ENCODE measurements at regions of chr9 and their contacts with region 1.

Region 1: DNA sequence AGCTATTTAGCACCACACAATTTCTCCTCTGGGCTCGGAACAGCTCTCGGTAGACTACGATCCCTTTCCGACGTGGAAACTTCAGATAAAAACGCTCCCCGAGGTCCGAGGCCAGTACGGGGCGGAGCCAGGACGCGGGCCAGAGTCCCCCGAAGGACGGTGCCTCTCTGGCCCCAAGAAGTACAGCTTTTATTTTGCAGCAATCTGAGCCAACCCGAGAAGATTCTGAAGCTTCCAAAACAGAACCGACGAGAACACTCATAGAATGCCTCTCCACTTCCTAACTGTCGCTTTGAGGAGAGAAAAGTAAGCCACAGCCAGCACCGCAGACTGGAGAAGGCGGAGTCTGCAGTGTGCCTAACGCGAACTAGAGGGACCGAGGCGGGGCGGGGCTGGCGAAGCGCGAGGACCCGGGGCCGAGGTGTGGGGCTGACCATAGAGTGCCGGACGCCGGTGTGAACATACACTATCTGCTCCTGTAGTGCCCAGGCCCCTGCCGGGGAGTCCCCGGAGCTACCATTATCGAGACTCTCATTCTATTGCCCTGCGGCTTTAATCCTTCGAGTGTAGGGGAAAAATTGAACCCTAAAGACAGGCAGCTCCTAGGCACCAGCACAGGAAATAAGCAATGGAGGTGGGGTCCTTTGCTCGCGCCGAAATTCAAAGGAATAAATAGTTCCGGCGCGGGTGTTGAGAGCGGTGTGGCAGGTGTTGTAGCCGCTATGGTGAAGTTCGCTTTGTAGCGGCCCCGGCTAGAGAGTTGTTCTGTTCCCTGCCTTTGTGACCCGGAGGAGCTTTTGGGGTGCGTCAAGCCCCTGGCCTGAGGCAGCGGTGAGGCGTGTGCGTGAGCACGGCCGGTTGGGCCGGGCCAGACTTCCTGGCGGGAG is at the start of gene SMC2:
- DNase-seq: peak; percentile 89 to 97 (median 95)
- ATAC-seq: peak; percentile 98
- H3K4me3 ChIP-seq: peak within 1 kb of the TSS; percentile 87
- H3K4me3 Mint-ChIP-seq: peak within 1 kb of the TSS; percentile 95 to 100 (median 100)
- H3K27ac ChIP-seq: peak within 1 kb of the TSS; percentile 94
- H3K27ac Mint-ChIP-seq: peak within 1 kb of the TSS; percentile 94 to 100 (median 99)
- H3K4me1 ChIP-seq: peaks cover 11 to 17% of the 10 kb centered on the region in 2 donors
- H3K4me1 Mint-ChIP-seq: peaks cover 17 to 58% (median 49%) of the 10 kb centered on the region in 7 donors
- H3K27me3 ChIP-seq: no peaks in the 10 kb centered on the region
- H3K27me3 Mint-ChIP-seq: peaks cover 0 to 3% (median 0%) of the 10 kb centered on the region in 5 donors
- total RNA-seq, gene SMC2: 4.4 to 53.6 (median 11.3) TPM

Region 2: DNA sequence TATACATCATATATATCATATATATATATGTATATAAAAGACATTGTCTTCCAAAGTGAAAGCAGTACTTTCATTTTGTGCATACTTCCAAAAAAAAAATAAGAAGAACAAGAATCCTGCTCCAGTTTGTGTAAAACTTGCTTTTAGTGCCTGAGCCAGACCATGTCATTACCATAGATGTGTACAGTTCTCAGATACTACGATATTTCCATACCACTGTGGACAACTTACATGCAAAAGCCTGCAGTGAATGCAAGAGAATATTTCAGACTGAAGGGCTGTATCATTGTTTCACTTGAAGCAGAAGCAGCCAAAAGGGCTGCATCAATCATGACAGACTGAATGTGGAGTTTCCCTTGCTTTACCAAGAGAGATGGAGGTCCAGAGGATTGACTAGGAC is 1171.4 kb before region 1 on chr9:
- CTCF ChIA-PET with region 1: no interaction called
- POLR2A ChIA-PET with region 1: no interaction called
- intact Hi-C with region 1: loop called in 1 of 2 experiments (anchors 10 kb)
- DNase-seq: no peak
- ATAC-seq: no peak
- H3K4me3 ChIP-seq: no peak overlapping the region
- H3K4me3 Mint-ChIP-seq: no peak overlapping the region
- H3K27ac ChIP-seq: no peak overlapping the region
- H3K27ac Mint-ChIP-seq: no peak overlapping the region
- H3K4me1 ChIP-seq: no peaks in the 10 kb centered on the region
- H3K4me1 Mint-ChIP-seq: no peaks in the 10 kb centered on the region
- H3K27me3 ChIP-seq: no peaks in the 10 kb centered on the region
- H3K27me3 Mint-ChIP-seq: no peaks in the 10 kb centered on the region

Region 3: DNA sequence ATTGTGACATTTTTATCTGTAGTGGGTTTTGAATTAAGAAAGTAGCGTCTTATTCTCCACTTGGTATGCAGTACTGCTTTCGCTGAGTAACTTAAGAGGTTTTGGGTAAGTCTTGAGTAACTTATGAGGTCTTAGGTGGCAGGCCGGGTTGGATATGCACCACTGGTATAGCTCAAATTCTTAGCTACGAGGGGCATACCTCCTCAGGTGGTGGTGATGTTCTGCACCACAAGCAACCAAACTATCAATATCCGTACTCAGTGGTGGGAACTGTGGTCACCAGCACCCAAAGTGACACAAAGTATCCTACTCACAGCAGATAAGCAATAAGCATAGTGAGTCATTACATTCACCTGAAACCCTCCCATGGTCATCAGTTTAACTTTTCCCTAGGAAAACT is 13.9 kb after region 1 on chr9:
- CTCF ChIA-PET with region 1: no interaction called
- POLR2A ChIA-PET with region 1: interaction called, 3 read pairs
- intact Hi-C with region 1: loop called in 1 of 2 experiments (anchors 2 kb)
- DNase-seq: no peak
- ATAC-seq: no peak
- H3K4me3 ChIP-seq: no peak overlapping the region
- H3K4me3 Mint-ChIP-seq: no peak overlapping the region
- H3K27ac ChIP-seq: no peak overlapping the region
- H3K27ac Mint-ChIP-seq: no peak overlapping the region
- H3K4me1 ChIP-seq: no peaks in the 10 kb centered on the region
- H3K4me1 Mint-ChIP-seq: peaks cover 0 to 3% (median 0%) of the 10 kb centered on the region in 7 donors
- H3K27me3 ChIP-seq: no peaks in the 10 kb centered on the region
- H3K27me3 Mint-ChIP-seq: no peaks in the 10 kb centered on the region

Region 4: DNA sequence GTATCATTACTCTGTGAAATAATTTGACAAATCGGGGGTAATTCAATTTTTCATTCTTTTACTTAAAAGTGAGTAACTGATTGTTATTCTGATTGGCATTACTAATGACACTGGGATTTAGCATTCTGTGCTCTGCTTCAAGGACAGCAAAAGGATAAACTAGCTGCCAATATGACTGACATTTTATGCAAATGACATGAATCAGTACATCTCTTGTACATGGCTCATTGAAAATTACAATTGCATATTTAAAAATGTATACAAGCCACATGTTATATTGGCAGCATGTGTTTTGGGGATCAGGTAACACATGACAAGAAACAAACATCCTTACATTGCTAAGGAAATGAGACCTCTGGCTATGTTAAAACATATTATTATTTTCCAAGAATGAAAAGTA is 79.2 kb after region 1 on chr9:
- CTCF ChIA-PET with region 1: no interaction called
- POLR2A ChIA-PET with region 1: no interaction called
- intact Hi-C with region 1: no loop called
- DNase-seq: no peak
- ATAC-seq: no peak
- H3K4me3 ChIP-seq: no peak overlapping the region
- H3K4me3 Mint-ChIP-seq: no peak overlapping the region
- H3K27ac ChIP-seq: no peak overlapping the region
- H3K27ac Mint-ChIP-seq: no peak overlapping the region
- H3K4me1 ChIP-seq: no peaks in the 10 kb centered on the region
- H3K4me1 Mint-ChIP-seq: no peaks in the 10 kb centered on the region
- H3K27me3 ChIP-seq: no peaks in the 10 kb centered on the region
- H3K27me3 Mint-ChIP-seq: peaks cover 0 to 15% (median 7%) of the 10 kb centered on the region in 5 donors

Region 5: DNA sequence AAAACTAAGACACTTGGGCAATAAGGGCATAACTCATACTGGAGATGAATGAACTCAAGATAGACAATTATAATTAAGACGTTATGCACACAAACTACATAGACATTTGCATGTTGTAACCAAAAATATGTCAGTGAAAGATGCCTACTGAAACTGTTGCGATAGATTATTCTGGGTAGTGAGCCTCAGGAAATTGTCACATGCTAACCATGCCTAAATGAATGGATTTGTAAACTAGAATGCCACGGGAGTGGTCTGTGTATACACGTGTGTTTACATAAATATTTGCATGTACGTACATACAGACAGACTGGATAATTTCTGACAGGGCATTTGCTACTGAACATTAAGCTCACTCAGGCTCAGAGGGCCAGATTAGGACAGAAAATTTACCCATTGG is 671.2 kb after region 1 on chr9:
- CTCF ChIA-PET with region 1: no interaction called
- POLR2A ChIA-PET with region 1: no interaction called
- intact Hi-C with region 1: loop called in 1 of 2 experiments (anchors 5 kb)
- DNase-seq: no peak
- ATAC-seq: no peak
- H3K4me3 ChIP-seq: no peak overlapping the region
- H3K4me3 Mint-ChIP-seq: peak overlapping the region; percentile 29 to 99 (median 93)
- H3K27ac ChIP-seq: no peak overlapping the region
- H3K27ac Mint-ChIP-seq: peak overlapping the region in 1 of 9 donors; percentile 26
- H3K4me1 ChIP-seq: no peaks in the 10 kb centered on the region
- H3K4me1 Mint-ChIP-seq: peaks cover 4 to 14% (median 6%) of the 10 kb centered on the region in 7 donors
- H3K27me3 ChIP-seq: no peaks in the 10 kb centered on the region
- H3K27me3 Mint-ChIP-seq: peaks cover 0 to 7% (median 0%) of the 10 kb centered on the region in 5 donors

Region 6: DNA sequence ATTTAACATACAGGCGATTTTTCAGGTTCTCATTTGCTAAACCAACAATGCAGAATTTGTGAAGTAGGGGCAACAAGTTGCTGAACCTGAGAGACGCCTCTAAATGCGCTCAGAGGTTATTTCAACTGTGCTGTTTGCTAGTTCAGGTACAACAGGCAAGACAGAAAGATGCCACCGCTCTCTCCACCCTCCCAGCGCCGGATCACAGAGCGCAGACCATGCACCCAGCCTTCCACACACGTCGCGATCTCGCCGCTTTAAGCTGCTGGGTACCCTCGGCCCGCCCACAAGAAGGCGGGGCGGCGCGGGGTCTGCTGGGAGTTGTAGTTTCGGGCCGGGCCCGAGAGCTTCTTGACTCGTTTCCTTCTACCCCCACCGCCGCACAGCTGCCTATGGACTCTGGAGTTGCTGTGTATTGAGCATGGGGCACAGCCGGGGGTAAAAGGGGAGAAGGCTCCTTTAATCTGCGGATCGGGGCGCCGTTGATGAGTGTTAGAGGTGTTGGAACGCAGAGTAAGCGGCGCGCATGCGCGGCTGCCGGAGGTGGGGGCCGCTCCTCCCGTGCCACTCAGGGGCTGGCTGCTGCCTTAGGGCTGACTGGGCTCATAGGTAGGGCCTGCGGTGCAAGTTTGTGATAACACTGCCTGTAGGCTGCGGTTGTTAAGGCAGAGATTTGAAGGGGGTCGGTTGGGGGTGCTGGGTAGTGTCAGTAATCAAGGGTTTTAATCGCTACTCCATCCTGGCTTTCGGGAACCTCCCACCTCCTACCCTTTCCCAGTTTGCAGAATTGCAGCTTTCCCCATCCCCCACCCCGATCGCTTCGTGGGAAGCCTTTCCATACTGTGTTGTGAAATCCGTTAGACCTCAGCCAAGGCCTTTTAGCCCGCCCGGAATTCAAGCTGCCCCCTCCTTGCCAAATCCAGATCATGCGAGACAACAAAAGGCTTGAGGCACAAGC is 874.4 kb after region 1 on chr9:
- CTCF ChIA-PET with region 1: no interaction called
- POLR2A ChIA-PET with region 1: no interaction called
- intact Hi-C with region 1: loop called in 1 of 2 experiments (anchors 2 kb)
- DNase-seq: peak; percentile 80 to 95 (median 91)
- ATAC-seq: peak; percentile 99
- H3K4me3 ChIP-seq: peak overlapping the region; percentile 85
- H3K4me3 Mint-ChIP-seq: peak overlapping the region; percentile 82 to 96 (median 94)
- H3K27ac ChIP-seq: peak overlapping the region; percentile 69
- H3K27ac Mint-ChIP-seq: peak overlapping the region; percentile 64 to 92 (median 86)
- H3K4me1 ChIP-seq: peaks cover 0 to 6% of the 10 kb centered on the region in 2 donors
- H3K4me1 Mint-ChIP-seq: peaks cover 12 to 25% (median 17%) of the 10 kb centered on the region in 7 donors
- H3K27me3 ChIP-seq: peaks cover 0 to 4% of the 10 kb centered on the region in 2 donors
- H3K27me3 Mint-ChIP-seq: peaks cover 0 to 30% (median 0%) of the 10 kb centered on the region in 5 donors

Region 7: DNA sequence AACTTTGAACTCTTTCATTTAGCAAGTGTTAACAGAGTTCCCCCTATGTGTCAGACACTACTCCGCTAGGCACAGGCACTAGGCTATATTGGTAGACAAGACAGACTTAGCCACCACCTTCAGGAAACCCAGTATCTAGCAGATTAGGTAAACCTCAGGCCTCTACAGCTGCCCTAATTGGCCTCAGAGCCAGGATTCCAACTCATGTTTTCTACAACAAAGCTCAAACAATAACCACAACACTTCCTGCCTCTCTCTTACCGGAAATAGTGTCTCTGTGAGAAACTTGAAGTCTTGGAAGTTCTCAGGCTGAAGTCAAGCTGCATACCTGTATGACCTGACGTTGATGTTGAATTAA is 1034.0 kb after region 1 on chr9:
- CTCF ChIA-PET with region 1: interaction called, 3 read pairs
- POLR2A ChIA-PET with region 1: no interaction called
- intact Hi-C with region 1: loop called in 1 of 2 experiments (anchors 5 kb)
- DNase-seq: peak in 8 of 9 donors; percentile 41 to 92 (median 90)
- ATAC-seq: peak; percentile 99
- H3K4me3 ChIP-seq: no peak overlapping the region
- H3K4me3 Mint-ChIP-seq: peak overlapping the region; percentile 35 to 84 (median 74)
- H3K27ac ChIP-seq: no peak overlapping the region
- H3K27ac Mint-ChIP-seq: peak overlapping the region; percentile 42 to 95 (median 78)
- H3K4me1 ChIP-seq: peaks cover 31 to 55% of the 10 kb centered on the region in 2 donors
- H3K4me1 Mint-ChIP-seq: peaks cover 36 to 67% (median 63%) of the 10 kb centered on the region in 7 donors
- H3K27me3 ChIP-seq: no peaks in the 10 kb centered on the region
- H3K27me3 Mint-ChIP-seq: peaks cover 0 to 35% (median 0%) of the 10 kb centered on the region in 5 donors

Region 8: GRCh38 chr9:105447814-105448812 is 1354.2 kb after region 1 on chr9 and contains the start of gene FSD1L:
- CTCF ChIA-PET with region 1: no interaction called
- POLR2A ChIA-PET with region 1: no interaction called
- intact Hi-C with region 1: loop called (anchors 5 to 10 kb)
- DNase-seq: peak; percentile 38 to 86 (median 67)
- ATAC-seq: peak; percentile 94
- H3K4me3 ChIP-seq: peak within 1 kb of the TSS; percentile 81
- H3K4me3 Mint-ChIP-seq: peak within 1 kb of the TSS; percentile 70 to 89 (median 84)
- H3K27ac ChIP-seq: peak within 1 kb of the TSS; percentile 43
- H3K27ac Mint-ChIP-seq: peak within 1 kb of the TSS in 4 of 9 donors; percentile 34 to 80 (median 46)
- H3K4me1 ChIP-seq: peaks cover 3 to 5% of the 10 kb centered on the region in 2 donors
- H3K4me1 Mint-ChIP-seq: peaks cover 0 to 35% (median 9%) of the 10 kb centered on the region in 7 donors
- H3K27me3 ChIP-seq: no peaks in the 10 kb centered on the region
- H3K27me3 Mint-ChIP-seq: peaks cover 0 to 8% (median 3%) of the 10 kb centered on the region in 5 donors
- total RNA-seq, gene FSD1L: 0.38 to 5.8 (median 0.61) TPM

Measured in naive thymus-derived CD4-positive, alpha-beta T cell (primary cell).